Activated T-helper 1 cell treated with anti-CD3 and anti-CD28 coated beads, Interleukin-12 subunit alpha, Interleukin-12 subunit beta, Interleukin-2, Interleukin-4 antibody, amounts not matched to agents 30 ng/mL and 10 ng/mL and 1 ng/mL, durations not matched to agents 14 hours and 24 hours and 36 hours (primary cell): ENCODE measurements at regions of chr12 and their contacts with region 1.

Region 1: DNA sequence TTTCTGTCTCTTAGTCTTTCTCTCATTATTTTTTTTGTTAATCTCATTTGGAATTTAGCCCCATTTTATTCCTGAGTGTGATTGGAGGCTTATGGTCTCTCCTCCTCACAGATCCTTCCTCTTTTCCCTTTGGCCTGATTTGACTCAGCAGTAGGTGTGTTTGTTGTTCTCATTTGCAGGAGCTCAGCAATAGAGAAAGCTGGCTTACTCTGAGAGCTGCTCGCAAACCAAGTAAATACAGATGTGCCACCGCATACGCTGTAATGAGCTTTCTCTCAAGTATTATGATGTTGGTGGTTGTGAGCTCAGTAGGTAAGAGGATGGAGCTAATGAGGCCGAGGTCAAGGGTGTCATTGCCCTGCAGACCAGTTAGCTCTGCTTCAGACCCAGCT is 206.5 kb downstream of the ETV6 start:
- DNase-seq: no peak
- H3K4me3 Mint-ChIP-seq: peak overlapping the region; percentile 62
- H3K27ac Mint-ChIP-seq: peak overlapping the region; percentile 88
- H3K4me1 Mint-ChIP-seq: peaks cover 74% of the 10 kb centered on the region
- H3K27me3 Mint-ChIP-seq: no peaks in the 10 kb centered on the region

Region 2: DNA sequence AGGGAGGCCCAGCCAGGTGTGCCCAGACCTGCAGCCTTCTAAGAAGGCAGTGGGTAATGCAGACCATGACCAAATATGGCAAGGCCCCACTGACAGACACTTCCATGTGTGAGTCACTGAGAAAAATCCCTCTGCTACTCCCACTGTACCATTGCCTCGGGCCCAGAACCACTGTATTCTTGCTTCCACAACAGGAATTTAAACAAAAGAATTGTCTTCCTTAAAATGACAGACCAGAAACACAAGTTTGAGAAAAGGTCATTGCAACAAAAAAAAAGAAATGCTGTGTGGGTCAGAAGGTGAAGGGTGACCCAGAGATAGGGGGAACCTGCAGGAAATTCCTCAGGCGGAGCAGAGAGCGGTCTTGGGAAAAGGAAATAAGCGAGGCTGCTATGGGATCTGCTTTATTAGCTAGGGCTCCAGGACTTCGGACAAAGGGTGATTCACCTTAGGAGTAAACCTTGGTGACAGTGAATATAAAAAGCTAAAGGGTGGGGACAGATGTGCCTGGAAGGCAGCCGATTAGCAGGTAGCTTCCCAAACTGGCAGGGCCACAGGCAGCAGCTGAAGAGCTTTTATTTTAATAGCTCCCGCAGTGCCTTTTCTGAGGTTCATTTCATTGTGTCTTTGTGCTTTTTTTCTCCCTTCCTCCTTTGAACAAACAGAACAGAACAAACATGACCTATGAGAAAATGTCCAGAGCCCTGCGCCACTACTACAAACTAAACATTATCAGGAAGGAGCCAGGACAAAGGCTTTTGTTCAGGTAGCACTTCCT is 29.5 kb after region 1 on chr12:
- intact Hi-C with region 1: loop called (anchors 5 kb)
- DNase-seq: no peak
- H3K4me3 Mint-ChIP-seq: no peak overlapping the region
- H3K27ac Mint-ChIP-seq: peak overlapping the region; percentile 41
- H3K4me1 Mint-ChIP-seq: peaks cover 75% of the 10 kb centered on the region
- H3K27me3 Mint-ChIP-seq: no peaks in the 10 kb centered on the region